Gastrocnemius medialis (tissue), 4 donors: ENCODE measurements at regions of chr2 and their contacts with region 1.

Region 1: DNA sequence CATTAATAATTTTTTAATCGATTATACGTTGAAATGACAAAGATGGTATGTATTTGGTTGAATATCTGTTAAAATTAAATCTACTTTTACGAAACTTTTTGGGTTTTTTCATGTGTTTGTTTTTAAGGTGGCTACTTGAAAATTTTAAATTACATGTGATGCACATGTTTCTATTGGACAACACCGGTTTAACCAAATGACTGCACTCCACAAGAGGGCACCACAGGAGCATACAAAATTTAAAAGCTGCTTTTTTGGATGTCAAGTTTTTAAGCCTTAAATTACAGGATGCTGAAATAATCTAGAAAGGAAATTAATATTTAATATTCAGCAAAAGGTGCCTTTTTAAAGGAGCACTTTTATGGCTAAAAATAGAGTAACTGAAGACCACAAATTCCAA is 98.7 kb downstream of the ACVR1 start:
- DNase-seq: no peak
- ATAC-seq: no peak
- H3K4me3 ChIP-seq: no peak overlapping the region
- H3K27ac ChIP-seq: no peak overlapping the region
- H3K4me1 ChIP-seq: peaks cover 23 to 24% of the 10 kb centered on the region in 2 donors
- H3K27me3 ChIP-seq: no peaks in the 10 kb centered on the region
- CTCF ChIP-seq: peak; percentile 56 to 77 (median 72)
- POLR2A ChIP-seq: no peak

Region 2: GRCh38 chr2:157492189-157492773 is 285.1 kb before region 1 on chr2:
- in situ Hi-C with region 1: loop called in 2 of 4 experiments (anchors 10 to 25 kb)
- intact Hi-C with region 1: no loop called
- DNase-seq: peak; percentile 10 to 28
- ATAC-seq: peak in 1 of 2 donors; percentile 56
- H3K4me3 ChIP-seq: no peak overlapping the region
- H3K27ac ChIP-seq: no peak overlapping the region
- H3K4me1 ChIP-seq: no peaks in the 10 kb centered on the region
- H3K27me3 ChIP-seq: no peaks in the 10 kb centered on the region
- CTCF ChIP-seq: peak in 4 of 5 experiments; percentile 32 to 65 (median 58)
- POLR2A ChIP-seq: no peak

Region 3: GRCh38 chr2:157825885-157826284 is 48.5 kb after region 1 on chr2:
- in situ Hi-C with region 1: no loop called
- intact Hi-C with region 1: no loop called
- DNase-seq: peak; percentile 64 to 70
- ATAC-seq: peak; percentile 96
- H3K4me3 ChIP-seq: no peak overlapping the region
- H3K27ac ChIP-seq: peak overlapping the region; percentile 47 to 71 (median 58)
- H3K4me1 ChIP-seq: peaks cover 45 to 65% of the 10 kb centered on the region in 2 donors
- H3K27me3 ChIP-seq: no peaks in the 10 kb centered on the region
- CTCF ChIP-seq: no peak
- POLR2A ChIP-seq: peak in 1 of 2 donors; percentile 17

Region 4: GRCh38 chr2:157995117-157995516 is 217.7 kb after region 1 on chr2:
- in situ Hi-C with region 1: loop called in 2 of 4 experiments (anchors 5 to 10 kb)
- intact Hi-C with region 1: no loop called
- DNase-seq: no peak
- ATAC-seq: no peak
- H3K4me3 ChIP-seq: no peak overlapping the region
- H3K27ac ChIP-seq: no peak overlapping the region
- H3K4me1 ChIP-seq: no peaks in the 10 kb centered on the region
- H3K27me3 ChIP-seq: no peaks in the 10 kb centered on the region
- CTCF ChIP-seq: no peak
- POLR2A ChIP-seq: no peak